WTC11 (cell line): ENCODE measurements at regions of chr2 and their contacts with region 1.

Region 1: DNA sequence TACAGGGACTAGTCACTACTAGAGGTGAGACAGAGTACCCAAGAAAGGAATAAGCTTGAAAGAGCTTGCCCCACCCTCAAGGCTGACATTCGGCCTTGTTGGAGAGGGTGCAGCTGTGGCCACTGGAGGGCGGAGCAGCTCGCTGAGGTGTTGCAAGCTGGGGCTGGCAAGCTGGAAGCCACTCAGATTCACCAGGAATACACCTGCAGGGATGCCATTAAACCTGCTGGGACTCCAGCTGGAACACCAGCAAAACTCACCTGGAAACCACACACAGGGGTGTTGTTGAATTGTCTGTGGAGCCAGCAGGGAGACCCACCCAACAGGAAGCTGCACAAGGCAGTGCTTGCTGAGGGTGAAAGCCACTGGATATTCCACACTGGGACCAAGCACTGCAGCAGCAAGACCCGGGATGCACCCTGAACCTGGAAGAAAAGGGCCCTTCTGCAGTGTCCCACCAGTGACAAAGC is 26.1 kb downstream of the KCTD18 start:
- DNase-seq: peak; percentile 82
- ATAC-seq: peak; percentile 80
- H3K4me3 Mint-ChIP-seq: no peak overlapping the region
- H3K27ac Mint-ChIP-seq: no peak overlapping the region
- H3K4me1 Mint-ChIP-seq: peaks cover 38% of the 10 kb centered on the region
- H3K27me3 Mint-ChIP-seq: no peaks in the 10 kb centered on the region
- CTCF ChIP-seq: no peak

Region 2: DNA sequence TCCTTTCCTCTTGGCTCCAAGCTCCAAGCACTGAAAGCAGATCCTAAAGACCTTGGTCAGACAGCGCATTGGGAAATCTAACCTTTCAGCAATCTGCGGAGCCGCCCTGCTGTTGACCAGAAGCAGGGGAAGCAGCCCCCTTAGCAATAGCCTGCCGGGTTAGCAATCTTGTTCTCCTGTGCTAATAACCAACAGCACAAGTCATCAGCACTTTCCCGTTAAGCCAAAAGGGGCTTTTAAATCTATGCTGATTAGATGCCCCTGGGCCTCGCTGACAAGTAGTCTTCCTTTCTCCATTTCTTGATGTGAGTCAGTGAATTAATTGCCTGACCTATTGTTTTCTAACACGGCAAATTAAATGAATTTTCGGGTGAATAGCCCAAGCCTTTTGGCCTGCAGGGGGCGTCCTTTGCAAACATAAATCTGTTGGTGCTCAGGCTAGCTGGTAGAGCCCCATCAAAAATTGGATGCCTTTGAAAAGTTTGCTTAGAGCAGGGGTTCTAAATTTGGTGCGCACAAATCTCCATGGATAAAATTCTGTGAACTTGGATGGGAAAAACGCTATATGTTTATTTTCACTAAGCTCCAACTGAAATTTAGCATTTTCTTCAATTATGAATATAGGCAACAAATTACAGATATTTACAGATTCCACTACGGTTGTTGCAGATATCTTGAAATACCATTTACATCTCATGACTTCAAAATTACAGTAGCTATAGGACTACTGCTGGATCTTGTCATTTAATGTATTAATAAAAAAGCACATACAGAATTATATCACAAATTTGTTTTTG is 503.7 kb before region 1 on chr2:
- CTCF ChIA-PET with region 1: interaction called, 43 read pairs
- POLR2A ChIA-PET with region 1: no interaction called
- DNase-seq: peak; percentile 92
- ATAC-seq: peak; percentile 69
- H3K4me3 Mint-ChIP-seq: peak overlapping the region; percentile 46
- H3K27ac Mint-ChIP-seq: peak overlapping the region; percentile 80; the same call in 1 of the 2 replicates
- H3K4me1 Mint-ChIP-seq: peaks cover 50% of the 10 kb centered on the region
- H3K27me3 Mint-ChIP-seq: no peaks in the 10 kb centered on the region
- CTCF ChIP-seq: peak; percentile 82

Region 3: GRCh38 chr2:200054681-200055468 is 428.9 kb before region 1 on chr2:
- CTCF ChIA-PET with region 1: interaction called, 12 read pairs
- POLR2A ChIA-PET with region 1: no interaction called
- DNase-seq: peak; percentile 83
- ATAC-seq: peak; percentile 97
- H3K4me3 Mint-ChIP-seq: no peak overlapping the region
- H3K27ac Mint-ChIP-seq: peak overlapping the region; percentile 50; the same call in 1 of the 2 replicates
- H3K4me1 Mint-ChIP-seq: peaks cover 29% of the 10 kb centered on the region
- H3K27me3 Mint-ChIP-seq: no peaks in the 10 kb centered on the region
- CTCF ChIP-seq: peak; percentile 28; the same call in 1 of the 2 replicates

Region 4: GRCh38 chr2:200461846-200462710 is 21.7 kb before region 1 on chr2:
- CTCF ChIA-PET with region 1: no interaction called
- POLR2A ChIA-PET with region 1: no interaction called
- DNase-seq: no peak
- ATAC-seq: no peak
- H3K4me3 Mint-ChIP-seq: no peak overlapping the region
- H3K27ac Mint-ChIP-seq: peak overlapping the region; percentile 17; the same call in 1 of the 2 replicates
- H3K4me1 Mint-ChIP-seq: no peaks in the 10 kb centered on the region; the same call in 1 of the 2 replicates
- H3K27me3 Mint-ChIP-seq: no peaks in the 10 kb centered on the region
- CTCF ChIP-seq: no peak

Region 5: GRCh38 chr2:200509612-200510433 is 26.1 kb after region 1 on chr2 and contains the start of gene KCTD18:
- CTCF ChIA-PET with region 1: interaction called, 62 read pairs
- POLR2A ChIA-PET with region 1: no interaction called
- DNase-seq: peak; percentile 91
- ATAC-seq: peak; percentile 95
- H3K4me3 Mint-ChIP-seq: peak within 1 kb of the TSS; percentile 77
- H3K27ac Mint-ChIP-seq: peak within 1 kb of the TSS; percentile 13; the same call in 1 of the 2 replicates
- H3K4me1 Mint-ChIP-seq: peaks cover 10% of the 10 kb centered on the region
- H3K27me3 Mint-ChIP-seq: no peaks in the 10 kb centered on the region
- CTCF ChIP-seq: peak; percentile 66; the same call in 1 of the 2 replicates
- total RNA-seq, gene KCTD18: 4.9 to 6.7 TPM (median 5.7 TPM) in 3 replicates

Region 6: DNA sequence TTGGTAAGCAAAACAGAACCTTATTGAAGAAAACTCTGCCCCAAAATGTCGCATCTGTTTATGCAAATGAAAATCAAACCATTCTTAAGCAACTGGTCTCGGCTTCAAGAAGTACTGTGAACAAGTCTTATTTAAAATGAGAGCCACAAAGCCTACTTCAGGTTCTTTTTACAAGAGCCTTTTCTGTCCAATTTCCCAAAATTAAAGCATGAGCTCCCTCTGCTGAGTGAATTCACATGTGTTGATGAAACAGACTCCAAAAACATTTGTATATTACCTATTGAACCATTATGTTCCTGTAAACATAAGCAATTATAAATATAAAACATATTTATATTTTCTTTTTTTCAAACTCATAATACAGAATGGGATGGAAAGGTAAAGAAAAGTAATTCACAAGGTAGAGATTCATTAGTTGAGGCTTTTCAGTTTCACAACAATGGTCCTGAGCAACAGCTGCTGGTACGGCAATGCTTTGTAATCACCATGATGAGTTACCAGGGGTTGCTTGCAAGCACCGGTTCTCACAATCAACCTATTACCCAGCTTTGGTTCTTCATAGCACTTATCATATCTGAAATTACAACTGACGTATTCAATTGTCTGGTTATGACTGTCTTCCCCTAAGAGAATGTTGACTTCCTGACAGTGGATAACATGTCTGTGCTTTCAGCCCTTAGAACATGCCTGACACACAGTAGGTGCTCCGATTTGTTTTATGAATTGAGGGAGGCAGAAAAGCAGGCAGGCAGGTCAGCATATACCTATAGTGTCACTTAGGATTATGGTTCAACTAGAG is 219.6 kb after region 1 on chr2:
- CTCF ChIA-PET with region 1: interaction called, 40 read pairs
- POLR2A ChIA-PET with region 1: interaction called, 3 read pairs
- DNase-seq: no peak
- ATAC-seq: no peak
- H3K4me3 Mint-ChIP-seq: no peak overlapping the region
- H3K27ac Mint-ChIP-seq: no peak overlapping the region; the same call in 1 of the 2 replicates
- H3K4me1 Mint-ChIP-seq: peaks cover 17% of the 10 kb centered on the region
- H3K27me3 Mint-ChIP-seq: no peaks in the 10 kb centered on the region
- CTCF ChIP-seq: no peak